Natural killer cell (primary cell): ENCODE measurements at regions of chr18 and their contacts with region 1.

Region 1: GRCh38 chr18:49178736-49179135 is 228.0 kb upstream of the SMAD7 start:
- DNase-seq: peak in 1 of 2 donors; percentile 36
- ATAC-seq: no peak
- H3K4me3 ChIP-seq: no peak overlapping the region
- H3K4me3 Mint-ChIP-seq: no peak overlapping the region
- H3K27ac ChIP-seq: no peak overlapping the region
- H3K27ac Mint-ChIP-seq: no peak overlapping the region
- H3K4me1 ChIP-seq: no peaks in the 10 kb centered on the region
- H3K4me1 Mint-ChIP-seq: peaks cover 9 to 13% of the 10 kb centered on the region in 2 donors
- H3K27me3 ChIP-seq: no peaks in the 10 kb centered on the region
- H3K27me3 Mint-ChIP-seq: no peaks in the 10 kb centered on the region
- CTCF ChIP-seq: peak; percentile 31

Region 2: DNA sequence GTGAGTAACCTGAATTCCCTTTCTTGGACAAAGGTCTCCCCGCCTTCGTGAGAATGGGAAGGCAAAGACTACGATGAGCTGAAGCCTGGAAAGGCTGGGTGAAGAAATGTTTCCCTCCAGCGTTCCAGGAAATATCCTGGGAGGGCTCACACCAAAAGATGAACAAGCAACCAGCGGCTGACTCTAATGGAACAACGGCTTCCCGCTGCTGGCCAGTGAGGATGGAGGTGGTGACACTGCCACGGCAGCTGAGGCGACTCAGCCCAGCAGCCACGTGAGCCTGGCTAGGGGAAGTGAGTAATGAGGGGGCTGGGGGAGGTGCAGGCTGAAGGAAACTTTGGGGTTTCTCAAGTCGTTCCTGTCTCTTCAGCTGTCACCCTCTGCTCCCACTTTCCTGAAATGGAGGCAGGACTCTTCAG is 123.0 kb before region 1 on chr18:
- intact Hi-C with region 1: loop called (anchors 10 kb)
- DNase-seq: peak; percentile 29 to 67
- ATAC-seq: peak; percentile 57 to 73 (median 70)
- H3K4me3 ChIP-seq: no peak overlapping the region
- H3K4me3 Mint-ChIP-seq: peak overlapping the region; percentile 76
- H3K27ac ChIP-seq: no peak overlapping the region
- H3K27ac Mint-ChIP-seq: peak overlapping the region; percentile 79 to 93
- H3K4me1 ChIP-seq: peaks cover 74% of the 10 kb centered on the region
- H3K4me1 Mint-ChIP-seq: peaks cover 74 to 75% of the 10 kb centered on the region in 2 donors
- H3K27me3 ChIP-seq: no peaks in the 10 kb centered on the region
- H3K27me3 Mint-ChIP-seq: no peaks in the 10 kb centered on the region
- CTCF ChIP-seq: no peak